BJ (cell line): ENCODE measurements at regions of chr5 and their contacts with region 1.

Region 1: DNA sequence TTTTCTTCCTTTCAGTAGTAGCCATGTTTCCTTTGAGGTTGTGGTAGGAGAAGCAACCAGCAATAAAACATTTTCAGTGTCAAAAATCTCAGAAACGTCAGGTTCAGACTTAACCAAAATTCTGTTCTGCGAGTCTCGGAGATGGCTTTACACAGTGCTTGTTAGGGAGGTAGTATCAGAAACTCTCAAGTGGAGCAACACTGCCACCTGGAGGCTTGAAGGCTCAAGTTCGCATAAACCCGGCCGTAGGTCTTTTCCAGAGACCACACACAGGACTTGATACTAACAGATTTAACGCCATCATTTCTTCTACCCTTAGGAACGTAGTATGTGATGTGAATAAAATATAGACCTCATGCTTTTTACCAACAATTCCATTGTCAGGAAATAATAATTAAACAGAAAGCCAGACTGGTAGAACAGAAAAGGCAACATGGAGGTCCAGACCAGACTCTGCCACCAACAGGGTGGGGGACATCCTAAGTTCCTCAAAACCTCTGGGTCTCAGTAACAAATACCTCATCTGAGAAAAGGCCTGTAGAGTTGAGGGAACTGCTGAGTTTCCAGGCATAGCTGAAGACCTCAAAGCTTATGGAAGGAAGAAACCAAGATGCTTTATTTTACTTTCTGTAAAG is 8.5 kb downstream of the PTGER4 start:
- DNase-seq: peak; percentile 22
- H3K4me3 ChIP-seq: no peak overlapping the region
- H3K27me3 ChIP-seq: no peaks in the 10 kb centered on the region
- CTCF ChIP-seq: peak; percentile 79

Region 2: DNA sequence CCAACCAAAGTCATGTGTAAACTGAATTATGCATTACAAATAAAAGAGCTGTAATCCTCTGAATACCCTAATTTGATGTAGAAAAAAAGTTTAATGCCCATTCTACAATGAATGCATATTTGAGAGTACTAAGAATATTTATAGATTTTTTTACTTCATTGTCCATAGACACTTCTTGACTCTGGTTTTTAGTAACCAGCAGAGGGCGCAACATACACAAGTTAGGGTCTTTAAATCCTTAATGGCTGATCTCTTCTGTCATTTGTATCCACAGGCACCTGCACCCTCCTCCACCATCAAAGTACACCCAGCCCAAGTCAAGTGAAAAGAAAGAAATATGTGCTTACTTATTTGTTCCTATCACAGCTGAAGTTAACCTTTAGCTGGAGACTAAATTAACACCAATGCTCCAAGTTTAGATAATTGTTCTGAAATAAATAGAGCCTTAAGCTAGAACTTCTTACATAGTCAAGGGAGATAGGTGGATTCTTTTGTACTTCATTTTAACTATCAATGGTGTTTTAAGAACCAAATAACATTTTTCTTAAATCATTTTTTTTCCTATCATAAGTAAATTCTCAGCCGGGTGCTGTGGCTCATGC is 739.3 kb before region 1 on chr5:
- CTCF ChIA-PET with region 1: interaction called, 10 read pairs
- POLR2A ChIA-PET with region 1: no interaction called
- DNase-seq: peak; percentile 1
- H3K4me3 ChIP-seq: no peak overlapping the region
- H3K27me3 ChIP-seq: no peaks in the 10 kb centered on the region
- CTCF ChIP-seq: peak; percentile 63